ENCODE measurements at regions of chr7 and their contacts with region 1.

Region 1: GRCh38 chr7:65251851-65252620 is 121.6 kb upstream of the ZNF92 start:
- DNase-seq: peak; percentile 85 to 93
- H3K4me3 ChIP-seq: peak overlapping the region; percentile 66 to 78 (median 70)
- H3K27ac ChIP-seq: no peak overlapping the region
- H3K4me1 ChIP-seq: peaks cover 0 to 8% (median 3%) of the 10 kb centered on the region in 4 experiments; a peak in 5 of 7 replicates
- H3K27me3 ChIP-seq: no peaks in the 10 kb centered on the region
- CTCF ChIP-seq: no peak
- EP300 ChIP-seq: peak in 1 of 2 experiments; percentile 71; a peak in 1 of 3 replicates
- POLR2A ChIP-seq: peak in 1 of 2 experiments; percentile 64; a peak in 2 of 3 replicates
- RAD21 ChIP-seq: no peak

Region 2: GRCh38 chr7:65264258-65264657 is 12.2 kb after region 1 on chr7:
- CTCF ChIA-PET with region 1: interaction called, 14 read pairs
- POLR2A ChIA-PET with region 1: interaction called, 5 read pairs
- DNase-seq: peak in 1 of 2 experiments; percentile 39
- H3K4me3 ChIP-seq: no peak overlapping the region
- H3K27ac ChIP-seq: no peak overlapping the region
- H3K4me1 ChIP-seq: peaks cover 0 to 11% (median 4%) of the 10 kb centered on the region in 4 experiments; a peak in 4 of 7 replicates
- H3K27me3 ChIP-seq: peaks cover 0 to 2% (median 0%) of the 10 kb centered on the region in 4 experiments; a peak in 1 of 7 replicates
- CTCF ChIP-seq: no peak
- EP300 ChIP-seq: no peak
- POLR2A ChIP-seq: no peak
- RAD21 ChIP-seq: no peak

Region 3: DNA sequence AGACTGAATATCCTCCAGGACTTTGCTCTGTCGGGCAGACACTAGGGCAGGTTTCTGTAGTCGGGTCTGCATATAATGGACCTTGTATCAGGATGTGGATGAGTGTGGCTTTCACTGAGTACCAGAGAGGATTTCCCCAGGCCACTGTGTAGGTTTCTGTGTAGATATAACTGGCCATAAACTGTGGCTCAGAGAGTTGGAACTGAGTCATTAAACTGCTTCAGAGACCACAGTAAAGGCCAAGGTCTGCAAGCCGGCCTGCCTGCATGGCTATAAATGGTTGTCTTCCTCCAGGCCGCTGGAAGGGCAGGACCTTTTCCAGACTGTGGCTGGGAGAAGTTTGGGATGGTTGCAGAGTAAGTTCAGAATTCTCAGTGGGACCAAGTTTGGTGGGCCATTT is 138.6 kb after region 1 on chr7:
- CTCF ChIA-PET with region 1: no interaction called
- POLR2A ChIA-PET with region 1: no interaction called
- DNase-seq: no peak
- H3K4me3 ChIP-seq: no peak overlapping the region
- H3K27ac ChIP-seq: no peak overlapping the region
- H3K4me1 ChIP-seq: no peaks in the 10 kb centered on the region
- H3K27me3 ChIP-seq: no peaks in the 10 kb centered on the region
- CTCF ChIP-seq: no peak
- EP300 ChIP-seq: no peak
- POLR2A ChIP-seq: no peak
- RAD21 ChIP-seq: no peak

Measured in H1 (cell line).